Cardiac septum (tissue), 1 donor: ENCODE measurements at regions of chr5 and their contacts with region 1.

Region 1: GRCh38 chr5:163505368-163506094 is at the start of gene MAT2B:
- DNase-seq: peak; percentile 99
- total RNA-seq, gene MAT2B: 45.2 TPM

Region 2: DNA sequence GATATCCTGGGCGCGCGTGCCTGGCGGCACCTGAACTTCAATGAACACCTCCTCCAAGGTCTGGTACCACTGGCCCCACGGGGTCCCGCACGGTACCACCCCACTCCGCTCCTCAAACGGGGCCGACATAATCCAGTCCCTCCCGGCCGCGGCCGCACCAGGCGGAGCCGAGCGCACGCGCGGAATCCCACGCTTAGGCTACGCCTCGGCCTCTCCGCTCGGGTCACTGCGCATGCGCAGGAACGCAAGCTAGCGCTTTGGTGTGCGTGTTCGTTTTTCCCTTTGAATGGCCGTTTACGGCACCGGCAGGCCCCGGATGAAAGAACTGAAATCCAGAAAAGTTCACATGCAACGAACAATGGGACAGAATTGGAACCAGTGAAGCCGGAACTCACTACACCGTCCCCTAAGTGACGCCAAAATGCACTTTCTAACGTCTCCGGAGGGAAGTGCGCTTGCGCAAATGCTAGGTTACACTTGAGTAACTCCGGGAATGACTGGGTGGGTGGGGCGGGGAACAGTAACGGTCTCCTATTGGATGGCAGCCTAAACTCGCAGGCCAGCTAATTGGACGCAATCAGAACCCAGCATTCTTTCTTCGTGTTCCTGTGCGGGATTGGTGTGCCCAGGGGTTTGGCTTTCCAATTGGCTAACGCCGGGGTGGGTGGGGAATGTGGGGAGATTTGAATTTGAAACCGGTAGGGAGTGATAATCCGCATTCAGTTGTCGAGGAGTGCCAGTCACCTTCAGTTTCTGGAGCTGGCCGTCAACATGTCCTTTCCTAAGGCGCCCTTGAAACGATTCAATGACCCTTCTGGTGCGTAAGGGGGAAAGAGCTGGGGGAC is 45.4 kb before region 1 on chr5 and contains the starts of genes HMMR and NUDCD2:
- intact Hi-C with region 1: loop called (anchors 2 kb)
- DNase-seq: peak; percentile 96
- total RNA-seq, gene HMMR: 0.46 TPM
- total RNA-seq, gene NUDCD2: 16.2 TPM

Region 3: GRCh38 chr5:163747586-163747985 is 242.1 kb after region 1 on chr5:
- intact Hi-C with region 1: no loop called
- DNase-seq: no peak